ENCODE measurements at regions of chr4 and their contacts with region 1.

Region 1: DNA sequence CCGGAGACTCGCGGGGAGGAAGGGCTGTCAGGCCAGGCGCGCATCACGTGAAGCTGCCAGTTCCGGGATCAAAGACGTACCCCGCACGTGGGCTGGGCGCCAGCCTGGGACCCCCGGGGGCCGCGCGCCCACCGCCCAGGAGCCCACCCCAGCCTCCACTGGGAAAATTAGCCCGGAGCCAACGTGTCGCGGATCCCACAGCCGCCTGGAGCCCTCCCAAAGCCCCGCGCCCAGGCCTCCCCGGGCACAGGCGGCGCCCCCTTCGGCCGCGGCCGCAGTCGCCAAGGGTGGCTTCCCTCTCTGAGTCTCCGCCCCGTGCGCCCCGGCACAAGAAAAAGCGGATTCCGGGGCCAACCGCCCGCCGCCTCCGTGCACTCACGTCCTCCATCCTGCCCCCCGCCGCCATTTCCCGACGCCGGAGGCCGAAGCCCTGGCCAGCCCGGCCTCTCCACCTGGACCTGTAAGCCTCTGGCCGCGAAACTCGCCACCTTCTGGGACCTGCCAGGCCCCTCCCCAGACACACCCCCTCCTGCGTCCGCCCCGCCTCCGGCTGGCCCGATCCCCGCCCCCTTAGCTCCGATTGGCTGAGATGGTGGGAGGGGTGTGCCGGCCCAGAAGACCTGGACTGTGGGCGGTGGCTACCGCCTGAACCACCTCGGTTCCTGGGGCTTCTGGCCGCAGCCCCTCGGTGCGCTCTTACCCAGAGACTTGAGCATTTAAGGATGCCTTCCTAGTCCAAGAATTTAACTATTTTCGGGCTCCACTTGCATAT is at the start of gene TMEM192:
- DNase-seq: peak; percentile 53
- H3K4me3 ChIP-seq: peak within 1 kb of the TSS; percentile 85
- H3K27ac ChIP-seq: peak within 1 kb of the TSS; percentile 63
- H3K27me3 ChIP-seq: no peaks in the 10 kb centered on the region
- CTCF ChIP-seq: peak; percentile 45
- polyA plus RNA-seq, gene TMEM192: 15.3 and 15.8 TPM in 2 replicates

Region 2: DNA sequence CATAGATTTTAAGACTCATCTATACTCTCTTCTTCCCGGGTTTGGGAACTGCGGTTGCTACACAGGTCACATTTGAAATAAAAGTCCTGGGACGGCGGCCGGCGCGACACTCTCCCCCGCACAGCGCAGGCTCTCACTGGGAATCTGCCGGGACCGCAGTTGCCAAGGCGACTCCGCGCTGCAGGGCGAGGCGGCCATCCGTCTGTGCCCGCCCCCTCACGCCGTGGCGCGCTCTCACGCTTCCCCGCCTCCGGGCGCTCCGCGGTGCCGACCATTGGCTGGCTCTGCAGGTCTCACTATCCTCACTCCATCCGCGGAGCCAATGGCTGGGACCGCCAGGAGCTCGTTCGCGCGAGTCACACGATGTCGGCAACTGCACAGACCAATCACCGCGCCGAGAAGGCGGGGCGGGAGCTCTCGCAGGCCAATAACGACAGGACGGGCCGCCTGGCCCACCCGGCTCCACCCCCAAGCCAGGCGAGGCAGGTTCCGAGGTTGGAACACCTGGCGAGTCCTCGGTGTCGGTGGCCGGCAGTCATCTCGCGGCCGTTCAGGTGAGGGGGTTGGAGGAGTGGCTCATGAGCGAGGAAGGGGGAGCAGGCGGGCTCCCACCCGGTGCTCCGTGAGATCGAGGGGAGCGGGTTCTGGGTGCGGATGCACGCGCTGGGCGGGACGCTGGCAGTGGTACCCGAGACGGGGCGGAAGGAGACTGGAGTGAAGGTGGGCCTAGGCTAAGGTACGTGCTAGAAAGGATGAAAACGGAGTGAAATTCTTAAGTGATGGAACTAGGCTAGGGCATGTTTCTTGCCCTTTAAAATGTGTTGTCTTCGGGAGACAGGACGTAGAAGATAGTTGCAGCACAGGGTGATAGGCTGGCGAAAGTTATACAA is 214.9 kb after region 1 on chr4 and contains the start of gene MSMO1:
- CTCF ChIA-PET with region 1: interaction called, 10 read pairs
- POLR2A ChIA-PET with region 1: no interaction called
- DNase-seq: peak; percentile 96
- H3K4me3 ChIP-seq: peak within 1 kb of the TSS; percentile 96
- H3K27ac ChIP-seq: peak within 1 kb of the TSS; percentile 87
- H3K27me3 ChIP-seq: no peaks in the 10 kb centered on the region
- CTCF ChIP-seq: no peak
- polyA plus RNA-seq, gene MSMO1: 43.0 and 53.0 TPM in 2 replicates

Region 3: DNA sequence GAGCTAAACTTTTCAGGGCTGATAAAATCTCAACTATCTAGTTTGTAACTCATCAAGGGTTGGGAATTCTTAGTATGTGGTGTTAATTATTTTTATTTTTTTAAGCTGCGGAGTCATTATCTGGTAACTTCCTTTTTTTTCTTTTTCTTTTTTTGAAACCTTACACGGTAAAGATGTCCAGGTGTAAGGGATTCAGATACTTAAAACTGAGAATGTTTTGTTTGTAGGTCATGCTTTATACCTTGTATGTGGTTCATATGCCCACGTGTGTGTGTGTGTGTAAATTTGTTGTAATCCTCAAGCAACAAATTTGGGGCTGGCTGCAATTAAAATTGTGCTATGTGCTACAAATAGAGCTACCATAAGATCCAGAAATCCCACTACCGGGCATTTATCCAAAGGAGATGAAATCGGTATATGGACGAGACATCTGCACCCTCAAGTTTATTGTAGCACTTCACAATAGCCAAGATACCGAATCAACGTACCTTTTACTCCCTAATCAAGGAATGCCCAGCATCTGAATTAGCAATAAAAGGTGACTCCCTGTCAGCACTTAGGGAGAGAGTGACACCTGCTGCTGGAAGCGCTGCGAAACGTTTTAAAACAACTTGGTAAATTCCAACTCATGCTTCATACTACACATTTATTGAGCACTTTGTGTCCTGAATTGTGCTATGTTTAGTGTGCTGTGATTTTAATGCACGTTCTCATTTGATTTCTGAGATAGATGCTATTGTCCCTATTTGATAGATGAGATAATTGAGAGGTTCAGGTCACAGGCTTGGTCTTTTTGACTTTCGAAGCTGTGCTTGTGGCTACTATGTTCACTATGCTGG is 231.0 kb after region 1 on chr4:
- CTCF ChIA-PET with region 1: interaction called, 20 read pairs
- POLR2A ChIA-PET with region 1: no interaction called
- DNase-seq: no peak
- H3K4me3 ChIP-seq: no peak overlapping the region
- H3K27ac ChIP-seq: no peak overlapping the region
- H3K27me3 ChIP-seq: peaks cover 4% of the 10 kb centered on the region
- CTCF ChIP-seq: peak; percentile 48

Region 4: GRCh38 chr4:165464813-165465381 is 352.3 kb after region 1 on chr4:
- CTCF ChIA-PET with region 1: interaction called, 25 read pairs
- POLR2A ChIA-PET with region 1: no interaction called
- DNase-seq: peak; percentile 11
- H3K4me3 ChIP-seq: no peak overlapping the region
- H3K27ac ChIP-seq: no peak overlapping the region
- H3K27me3 ChIP-seq: no peaks in the 10 kb centered on the region
- CTCF ChIP-seq: peak; percentile 80